ENCODE measurements at regions of chr3 and their contacts with region 1.

Region 1: DNA sequence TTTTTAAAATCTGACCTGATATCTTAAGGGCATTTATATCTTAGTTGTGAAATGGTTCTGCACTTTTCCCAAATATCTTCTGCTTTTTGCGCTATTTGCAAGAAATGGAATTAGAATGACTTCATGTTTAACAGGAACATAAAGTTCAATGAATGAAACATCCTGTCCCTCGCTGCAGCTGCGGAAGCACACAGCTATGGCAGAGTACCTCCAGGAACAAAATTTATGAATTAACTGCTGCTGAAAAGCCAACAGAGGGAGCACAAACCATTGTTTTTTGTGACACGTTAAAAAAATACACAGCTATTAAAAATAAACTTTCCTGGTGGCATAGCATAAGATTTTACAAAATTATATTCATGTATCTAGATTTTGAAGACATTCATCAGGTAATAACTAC is 404.4 kb upstream of the MDFIC2 start:
- DNase-seq: peak in 3 of 5 donors; percentile 15 to 34 (median 33)
- ATAC-seq: peak in 3 of 4 donors; percentile 62 to 78 (median 70)
- H3K4me3 ChIP-seq: no peak overlapping the region
- H3K27ac ChIP-seq: no peak overlapping the region
- H3K4me1 ChIP-seq: peaks cover 0 to 7% (median 0%) of the 10 kb centered on the region in 12 donors
- H3K27me3 ChIP-seq: no peaks in the 10 kb centered on the region
- CTCF ChIP-seq: peak; percentile 32 to 74 (median 52)
- POLR2A ChIP-seq: no peak

Region 2: GRCh38 chr3:70973558-70973957 is 256.7 kb after region 1 on chr3:
- intact Hi-C with region 1: loop called in 1 of 10 experiments (anchors 10 kb)
- DNase-seq: no peak
- ATAC-seq: no peak
- H3K4me3 ChIP-seq: no peak overlapping the region
- H3K27ac ChIP-seq: peak overlapping the region in 1 of 12 donors; percentile 86
- H3K4me1 ChIP-seq: peaks cover 0 to 28% (median 5%) of the 10 kb centered on the region in 12 donors
- H3K27me3 ChIP-seq: no peaks in the 10 kb centered on the region
- CTCF ChIP-seq: no peak
- POLR2A ChIP-seq: no peak

Region 3: GRCh38 chr3:71006810-71007785 is 290.3 kb after region 1 on chr3:
- intact Hi-C with region 1: loop called in 1 of 10 experiments (anchors 10 kb)
- DNase-seq: no peak
- ATAC-seq: peak in 3 of 4 donors; percentile 22 to 69 (median 65)
- H3K4me3 ChIP-seq: no peak overlapping the region
- H3K27ac ChIP-seq: peak overlapping the region in 10 of 12 donors; percentile 4 to 55 (median 32)
- H3K4me1 ChIP-seq: peaks cover 0 to 78% (median 39%) of the 10 kb centered on the region in 12 donors
- H3K27me3 ChIP-seq: no peaks in the 10 kb centered on the region
- CTCF ChIP-seq: peak in 11 of 12 donors; percentile 38 to 72 (median 55)
- POLR2A ChIP-seq: no peak

Region 4: GRCh38 chr3:71299160-71299559 is 582.3 kb after region 1 on chr3:
- intact Hi-C with region 1: loop called in 6 of 10 experiments (anchors 5 to 10 kb)
- DNase-seq: no peak
- ATAC-seq: no peak
- H3K4me3 ChIP-seq: no peak overlapping the region
- H3K27ac ChIP-seq: no peak overlapping the region
- H3K4me1 ChIP-seq: peaks cover 0 to 21% (median 9%) of the 10 kb centered on the region in 12 donors
- H3K27me3 ChIP-seq: no peaks in the 10 kb centered on the region
- CTCF ChIP-seq: no peak
- POLR2A ChIP-seq: no peak

Region 5: GRCh38 chr3:71599416-71599815 is 882.6 kb after region 1 on chr3:
- intact Hi-C with region 1: loop called in 1 of 10 experiments (anchors 10 kb)
- DNase-seq: no peak
- ATAC-seq: peak in 1 of 4 donors; percentile 39
- H3K4me3 ChIP-seq: no peak overlapping the region
- H3K27ac ChIP-seq: no peak overlapping the region
- H3K4me1 ChIP-seq: peaks cover 0 to 15% (median 0%) of the 10 kb centered on the region in 12 donors
- H3K27me3 ChIP-seq: no peaks in the 10 kb centered on the region
- CTCF ChIP-seq: no peak
- POLR2A ChIP-seq: no peak

Region 6: DNA sequence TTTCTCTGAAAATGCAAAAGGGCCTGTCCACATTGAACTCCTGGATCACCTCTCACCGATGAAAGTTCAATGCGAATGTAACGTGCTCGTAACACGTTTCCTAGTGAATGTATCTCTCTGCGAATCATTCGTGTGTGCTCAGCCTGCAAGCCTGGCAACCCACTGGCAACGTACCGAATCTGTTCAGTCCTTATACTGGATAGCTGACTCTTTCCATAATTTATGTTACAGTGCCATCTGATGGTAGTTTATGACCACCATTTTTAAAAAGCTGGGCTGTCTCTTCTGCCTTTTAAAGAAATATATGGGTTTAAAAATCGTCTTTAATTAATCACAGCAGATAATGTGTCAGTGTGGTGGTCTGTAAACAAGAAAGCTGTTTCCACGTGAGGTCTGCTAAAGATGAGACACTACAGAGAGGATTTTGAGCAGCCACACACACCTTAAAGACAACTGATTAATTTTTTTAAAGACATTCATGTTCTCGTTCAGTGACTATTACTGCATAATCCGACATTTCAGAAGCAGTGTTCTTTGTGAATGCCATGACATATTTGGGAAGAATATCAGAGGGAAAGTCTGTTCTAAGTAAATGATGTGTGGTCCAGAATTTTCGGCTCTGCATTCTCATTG is 936.1 kb after region 1 on chr3:
- intact Hi-C with region 1: loop called in 2 of 10 experiments (anchors 5 to 10 kb)
- DNase-seq: peak in 2 of 5 donors; percentile 24 to 48
- ATAC-seq: peak in 3 of 4 donors; percentile 67 to 79 (median 79)
- H3K4me3 ChIP-seq: no peak overlapping the region
- H3K27ac ChIP-seq: peak overlapping the region in 1 of 12 donors; percentile 13
- H3K4me1 ChIP-seq: peaks cover 0 to 8% (median 1%) of the 10 kb centered on the region in 12 donors
- H3K27me3 ChIP-seq: no peaks in the 10 kb centered on the region
- CTCF ChIP-seq: peak; percentile 21 to 68 (median 50)
- POLR2A ChIP-seq: no peak